ENCODE measurements at regions of chr4 and their contacts with region 1.

Region 1: DNA sequence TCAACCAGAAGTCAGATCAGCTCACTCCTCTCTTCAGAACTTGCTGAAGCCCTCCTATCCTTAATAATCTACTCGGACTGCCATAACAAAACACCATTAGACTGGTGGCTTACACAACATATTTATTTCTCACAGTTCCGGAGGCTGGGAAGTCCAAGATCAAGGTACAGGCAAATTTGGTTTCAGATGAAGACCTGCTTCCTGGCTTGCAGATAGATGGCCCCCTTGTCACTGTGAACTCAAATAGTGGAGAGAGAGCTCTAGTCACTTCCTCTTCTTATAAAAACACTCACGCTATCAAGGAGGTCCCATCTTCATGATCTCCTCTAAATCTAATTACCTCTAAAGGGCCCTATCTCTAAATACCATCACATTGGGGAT is 125.1 kb downstream of the CAMK2D start:
- DNase-seq: no peak
- ATAC-seq: peak; percentile 73
- H3K4me3 Mint-ChIP-seq: peak overlapping the region; percentile 49
- H3K27ac Mint-ChIP-seq: peak overlapping the region; percentile 88
- H3K4me1 Mint-ChIP-seq: peaks cover 76% of the 10 kb centered on the region
- H3K27me3 Mint-ChIP-seq: no peaks in the 10 kb centered on the region
- CTCF ChIP-seq: no peak

Region 2: GRCh38 chr4:113564493-113564892 is 71.9 kb before region 1 on chr4:
- CTCF ChIA-PET with region 1: interaction called, 10 read pairs
- POLR2A ChIA-PET with region 1: interaction called, 22 read pairs
- intact Hi-C with region 1: loop called (anchors 1 kb)
- DNase-seq: no peak
- ATAC-seq: peak; percentile 59
- H3K4me3 Mint-ChIP-seq: peak overlapping the region; percentile 81
- H3K27ac Mint-ChIP-seq: peak overlapping the region; percentile 97
- H3K4me1 Mint-ChIP-seq: peaks cover 87% of the 10 kb centered on the region
- H3K27me3 Mint-ChIP-seq: no peaks in the 10 kb centered on the region
- CTCF ChIP-seq: no peak

Region 3: GRCh38 chr4:113657586-113658233 is 21.3 kb after region 1 on chr4:
- CTCF ChIA-PET with region 1: no interaction called
- POLR2A ChIA-PET with region 1: no interaction called
- intact Hi-C with region 1: loop called (anchors 2 kb)
- DNase-seq: no peak
- ATAC-seq: no peak
- H3K4me3 Mint-ChIP-seq: no peak overlapping the region
- H3K27ac Mint-ChIP-seq: no peak overlapping the region
- H3K4me1 Mint-ChIP-seq: peaks cover 51% of the 10 kb centered on the region
- H3K27me3 Mint-ChIP-seq: no peaks in the 10 kb centered on the region
- CTCF ChIP-seq: no peak

Region 4: DNA sequence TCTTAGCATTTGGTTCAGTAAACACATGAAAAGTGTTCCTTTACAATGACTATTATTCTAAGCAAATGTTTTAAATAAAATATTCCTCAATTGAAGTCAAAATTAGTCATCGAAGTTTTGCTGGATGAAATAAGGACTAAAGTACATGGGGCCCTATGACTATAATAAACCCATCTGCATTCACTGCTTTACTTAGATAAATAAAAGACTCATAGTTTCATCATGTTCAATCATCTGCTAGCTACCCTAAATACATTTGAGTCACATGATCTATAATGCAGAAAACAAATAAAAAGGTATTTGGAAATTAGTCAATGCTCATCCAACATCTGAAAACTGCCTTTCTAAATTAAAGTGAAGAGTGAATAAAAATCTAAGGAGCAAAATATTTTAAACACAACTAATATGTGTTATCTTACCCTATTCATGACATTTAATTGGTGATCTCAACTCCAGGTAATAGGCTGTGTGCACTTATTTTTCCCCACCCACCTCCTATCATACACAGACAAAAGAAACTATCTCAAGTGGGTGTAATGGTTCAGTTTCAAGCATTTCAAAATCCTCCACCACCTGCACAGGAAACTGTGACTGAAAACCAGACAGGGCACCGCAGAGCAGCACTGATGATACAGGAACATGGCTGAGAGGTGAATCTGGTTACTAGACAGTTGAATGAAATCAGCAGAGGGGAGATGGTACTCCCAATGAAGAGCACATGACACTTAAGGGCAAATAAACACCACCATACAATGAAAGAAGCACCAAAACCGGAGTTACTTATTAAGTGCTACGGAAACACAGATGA is 46.5 kb after region 1 on chr4:
- CTCF ChIA-PET with region 1: interaction called, 4 read pairs
- POLR2A ChIA-PET with region 1: interaction called, 4 read pairs
- intact Hi-C with region 1: loop called (anchors 2 kb)
- DNase-seq: peak; percentile 33
- ATAC-seq: peak; percentile 93
- H3K4me3 Mint-ChIP-seq: peak overlapping the region; percentile 13
- H3K27ac Mint-ChIP-seq: peak overlapping the region; percentile 70
- H3K4me1 Mint-ChIP-seq: peaks cover 53% of the 10 kb centered on the region
- H3K27me3 Mint-ChIP-seq: no peaks in the 10 kb centered on the region
- CTCF ChIP-seq: no peak

Region 5: GRCh38 chr4:113908829-113909228 is 272.4 kb after region 1 on chr4:
- CTCF ChIA-PET with region 1: no interaction called
- POLR2A ChIA-PET with region 1: no interaction called
- intact Hi-C with region 1: loop called (anchors 1 kb)
- DNase-seq: no peak
- ATAC-seq: no peak
- H3K4me3 Mint-ChIP-seq: no peak overlapping the region
- H3K27ac Mint-ChIP-seq: no peak overlapping the region
- H3K4me1 Mint-ChIP-seq: no peaks in the 10 kb centered on the region
- H3K27me3 Mint-ChIP-seq: peaks cover 2% of the 10 kb centered on the region
- CTCF ChIP-seq: no peak

Measured in activated B cell treated with CpG ODN at 0.5 μM for 24 hours (primary cell).